ENCODE measurements at regions of chr11 and their contacts with region 1.

Region 1: DNA sequence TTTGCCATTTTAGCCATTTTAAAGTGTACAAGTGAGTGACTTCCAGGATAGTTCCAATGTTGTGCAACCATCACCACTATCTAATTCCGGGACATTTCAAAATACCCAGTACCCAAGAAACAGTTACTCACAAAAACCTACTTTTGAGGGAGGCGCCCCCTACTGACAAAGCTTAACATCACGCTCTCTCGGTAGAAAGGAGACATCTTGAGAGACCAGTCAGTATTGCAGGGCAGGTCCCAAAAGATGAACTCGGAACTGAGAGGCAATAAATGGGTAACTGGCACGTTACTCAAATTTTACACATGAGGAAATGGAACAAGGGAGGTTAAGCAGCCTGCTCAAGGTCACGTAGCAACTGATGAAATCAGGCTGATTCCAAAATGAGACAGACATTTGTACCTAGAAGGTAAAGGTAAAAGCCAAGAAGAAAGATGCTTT is 50.0 kb upstream of the POU2AF1 start:
- DNase-seq: peak in 4 of 5 donors; percentile 33 to 41 (median 40)
- H3K4me3 ChIP-seq: no peak overlapping the region
- H3K4me3 Mint-ChIP-seq: no peak overlapping the region
- H3K27ac ChIP-seq: no peak overlapping the region
- H3K27ac Mint-ChIP-seq: no peak overlapping the region
- H3K4me1 ChIP-seq: no peaks in the 10 kb centered on the region
- H3K4me1 Mint-ChIP-seq: no peaks in the 10 kb centered on the region
- H3K27me3 ChIP-seq: no peaks in the 10 kb centered on the region
- H3K27me3 Mint-ChIP-seq: peaks cover 3 to 10% of the 10 kb centered on the region in 2 donors

Region 2: GRCh38 chr11:111283945-111284481 is 145.1 kb before region 1 on chr11:
- CTCF ChIA-PET with region 1: interaction called, 233 read pairs
- POLR2A ChIA-PET with region 1: interaction called, 3 read pairs
- intact Hi-C with region 1: loop called (anchors 1 kb)
- DNase-seq: no peak
- H3K4me3 ChIP-seq: no peak overlapping the region
- H3K4me3 Mint-ChIP-seq: no peak overlapping the region
- H3K27ac ChIP-seq: no peak overlapping the region
- H3K27ac Mint-ChIP-seq: peak overlapping the region in 2 of 7 donors; percentile 5 to 53
- H3K4me1 ChIP-seq: no peaks in the 10 kb centered on the region
- H3K4me1 Mint-ChIP-seq: no peaks in the 10 kb centered on the region
- H3K27me3 ChIP-seq: no peaks in the 10 kb centered on the region
- H3K27me3 Mint-ChIP-seq: peaks cover 0 to 1% of the 10 kb centered on the region in 2 donors

Region 3: DNA sequence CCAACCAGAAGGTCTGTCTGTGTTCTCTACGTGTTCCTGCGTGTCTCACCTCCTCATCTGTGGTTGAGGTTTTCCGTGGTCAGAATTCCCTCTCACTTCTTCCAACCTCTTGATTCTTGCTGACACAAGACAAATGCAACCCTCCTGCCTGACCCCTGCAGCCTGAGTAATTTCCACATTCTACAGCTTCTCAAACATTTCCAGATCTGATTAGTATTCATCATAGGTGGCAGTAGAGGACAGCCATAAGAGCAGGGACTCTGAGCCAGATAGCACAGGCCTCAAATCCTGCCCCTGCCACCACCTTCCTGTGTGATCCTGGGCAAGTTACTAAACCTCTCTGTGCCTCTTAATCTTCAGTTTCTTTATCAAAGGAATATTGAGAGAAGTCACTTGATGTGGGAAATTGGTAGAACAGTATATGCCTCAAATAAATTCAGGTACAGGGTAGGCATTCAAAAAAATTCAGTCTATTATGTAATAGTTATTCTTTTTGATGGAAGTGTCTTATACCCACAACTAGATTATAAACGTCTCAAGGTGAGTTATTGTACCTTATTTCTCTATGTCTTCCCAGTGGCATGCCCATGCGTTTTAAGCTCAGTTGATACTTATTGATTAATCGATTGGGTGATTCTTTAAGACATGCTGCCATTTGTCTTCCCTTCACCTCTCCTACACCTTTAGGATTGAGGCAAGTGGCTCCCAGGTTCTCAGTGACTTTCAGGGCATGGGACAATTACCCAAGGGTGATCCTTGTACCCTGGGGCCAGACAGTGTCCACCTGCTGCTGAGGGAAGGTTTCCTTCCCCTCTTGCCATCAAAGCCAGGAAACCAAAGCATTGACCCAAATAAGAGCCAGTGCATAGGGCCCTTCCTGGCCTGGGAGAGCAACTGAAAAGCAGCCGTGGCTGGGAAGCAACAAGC is 69.6 kb before region 1 on chr11:
- CTCF ChIA-PET with region 1: no interaction called
- POLR2A ChIA-PET with region 1: no interaction called
- intact Hi-C with region 1: loop called (anchors 1 kb)
- DNase-seq: peak in 1 of 5 donors; percentile 6
- H3K4me3 ChIP-seq: no peak overlapping the region
- H3K4me3 Mint-ChIP-seq: no peak overlapping the region
- H3K27ac ChIP-seq: no peak overlapping the region
- H3K27ac Mint-ChIP-seq: peak overlapping the region in 1 of 7 donors; percentile 16
- H3K4me1 ChIP-seq: no peaks in the 10 kb centered on the region
- H3K4me1 Mint-ChIP-seq: no peaks in the 10 kb centered on the region
- H3K27me3 ChIP-seq: no peaks in the 10 kb centered on the region
- H3K27me3 Mint-ChIP-seq: no peaks in the 10 kb centered on the region

Region 4: GRCh38 chr11:111370902-111371578 is 58.0 kb before region 1 on chr11:
- CTCF ChIA-PET with region 1: interaction called, 10 read pairs
- POLR2A ChIA-PET with region 1: no interaction called
- intact Hi-C with region 1: loop called (anchors 5 kb)
- DNase-seq: no peak
- H3K4me3 ChIP-seq: no peak overlapping the region
- H3K4me3 Mint-ChIP-seq: no peak overlapping the region
- H3K27ac ChIP-seq: no peak overlapping the region
- H3K27ac Mint-ChIP-seq: peak overlapping the region in 1 of 7 donors; percentile 10
- H3K4me1 ChIP-seq: no peaks in the 10 kb centered on the region
- H3K4me1 Mint-ChIP-seq: peaks cover 0 to 6% (median under 1%) of the 10 kb centered on the region in 4 donors
- H3K27me3 ChIP-seq: no peaks in the 10 kb centered on the region
- H3K27me3 Mint-ChIP-seq: no peaks in the 10 kb centered on the region

Region 5: GRCh38 chr11:111378861-111379601 is 50.1 kb before region 1 on chr11 and contains the start of gene POU2AF1:
- CTCF ChIA-PET with region 1: interaction called, 14 read pairs
- POLR2A ChIA-PET with region 1: no interaction called
- intact Hi-C with region 1: loop called (anchors 5 kb)
- DNase-seq: peak; percentile 69 to 79 (median 71)
- H3K4me3 ChIP-seq: peak within 1 kb of the TSS in 1 of 2 donors; percentile 46
- H3K4me3 Mint-ChIP-seq: peak within 1 kb of the TSS; percentile 77 to 91 (median 87)
- H3K27ac ChIP-seq: peak within 1 kb of the TSS; percentile 27
- H3K27ac Mint-ChIP-seq: peak within 1 kb of the TSS; percentile 86 to 99 (median 94)
- H3K4me1 ChIP-seq: peaks cover 24% of the 10 kb centered on the region
- H3K4me1 Mint-ChIP-seq: peaks cover 14 to 30% (median 24%) of the 10 kb centered on the region in 4 donors
- H3K27me3 ChIP-seq: no peaks in the 10 kb centered on the region
- H3K27me3 Mint-ChIP-seq: no peaks in the 10 kb centered on the region
- total RNA-seq, gene POU2AF1: 0.47 to 0.64 TPM

Region 6: DNA sequence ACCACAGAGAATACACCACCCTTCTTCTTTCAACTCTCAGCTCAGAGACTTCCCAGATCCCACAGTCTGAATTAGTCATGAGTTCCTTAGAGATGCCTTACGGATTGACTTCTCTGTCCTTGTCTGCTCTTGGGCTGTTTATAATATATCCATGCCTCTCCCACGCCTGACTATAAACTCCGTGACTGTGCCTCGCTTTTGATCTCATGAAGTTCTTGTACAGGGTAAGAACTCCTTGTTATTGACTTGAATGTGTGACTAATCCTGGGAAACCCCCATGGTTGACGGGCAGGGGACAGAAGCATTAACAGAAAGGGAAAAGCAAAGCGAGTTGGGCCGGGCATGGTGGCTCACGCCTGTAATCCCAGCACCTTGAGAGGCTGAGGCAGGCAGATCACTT is 12.4 kb after region 1 on chr11:
- CTCF ChIA-PET with region 1: interaction called, 24 read pairs
- POLR2A ChIA-PET with region 1: interaction called, 6 read pairs
- intact Hi-C with region 1: no loop called
- DNase-seq: no peak
- H3K4me3 ChIP-seq: no peak overlapping the region
- H3K4me3 Mint-ChIP-seq: no peak overlapping the region
- H3K27ac ChIP-seq: no peak overlapping the region
- H3K27ac Mint-ChIP-seq: peak overlapping the region in 1 of 7 donors; percentile 14
- H3K4me1 ChIP-seq: peaks cover 19% of the 10 kb centered on the region
- H3K4me1 Mint-ChIP-seq: peaks cover 15 to 24% (median 20%) of the 10 kb centered on the region in 4 donors
- H3K27me3 ChIP-seq: no peaks in the 10 kb centered on the region
- H3K27me3 Mint-ChIP-seq: peaks cover 0 to 1% of the 10 kb centered on the region in 2 donors